ENCODE measurements at regions of chr12 and their contacts with region 1.

Region 1: GRCh38 chr12:113184900-113185773 is at the starts of genes DDX54 and RITA1:
- DNase-seq: peak; percentile 86 to 93 (median 90)
- H3K4me3 ChIP-seq: peak within 1 kb of the TSS; percentile 82
- H3K27ac ChIP-seq: peak within 1 kb of the TSS; percentile 74 to 97
- H3K4me1 ChIP-seq: peaks cover 12% of the 10 kb centered on the region
- H3K27me3 ChIP-seq: no peaks in the 10 kb centered on the region
- CTCF ChIP-seq: peak in 1 of 3 donors; percentile 8
- EP300 ChIP-seq: no peak
- POLR2A ChIP-seq: peak; percentile 38
- total RNA-seq, gene DDX54: 54.0 to 77.5 (median 71.4) TPM
- total RNA-seq, gene RITA1: 13.6 to 19.4 (median 15.4) TPM

Region 2: GRCh38 chr12:113098446-113098896 is 86.7 kb before region 1 on chr12:
- intact Hi-C with region 1: no loop called
- DNase-seq: peak in 4 of 5 donors; percentile 30 to 57 (median 50)
- H3K4me3 ChIP-seq: no peak overlapping the region
- H3K27ac ChIP-seq: no peak overlapping the region
- H3K4me1 ChIP-seq: peaks cover 1% of the 10 kb centered on the region
- H3K27me3 ChIP-seq: no peaks in the 10 kb centered on the region
- CTCF ChIP-seq: peak in 2 of 3 donors; percentile 34 to 37
- EP300 ChIP-seq: no peak
- POLR2A ChIP-seq: no peak

Region 3: GRCh38 chr12:113358381-113359132 is 173.4 kb after region 1 on chr12 and contains the start of gene PLBD2:
- intact Hi-C with region 1: loop called in 2 of 4 experiments (anchors 5 to 10 kb)
- DNase-seq: peak; percentile 96 to 97 (median 96)
- H3K4me3 ChIP-seq: peak within 1 kb of the TSS; percentile 82
- H3K27ac ChIP-seq: peak within 1 kb of the TSS; percentile 61 to 84
- H3K4me1 ChIP-seq: peaks cover 13% of the 10 kb centered on the region
- H3K27me3 ChIP-seq: no peaks in the 10 kb centered on the region
- CTCF ChIP-seq: peak in 1 of 3 donors; percentile 7
- EP300 ChIP-seq: peak; percentile 51
- POLR2A ChIP-seq: peak; percentile 55
- total RNA-seq, gene PLBD2: 31.5 to 101 (median 81.9) TPM